Motor neuron (in vitro differentiated cells): ENCODE measurements at regions of chr3 and their contacts with region 1.

Region 1: DNA sequence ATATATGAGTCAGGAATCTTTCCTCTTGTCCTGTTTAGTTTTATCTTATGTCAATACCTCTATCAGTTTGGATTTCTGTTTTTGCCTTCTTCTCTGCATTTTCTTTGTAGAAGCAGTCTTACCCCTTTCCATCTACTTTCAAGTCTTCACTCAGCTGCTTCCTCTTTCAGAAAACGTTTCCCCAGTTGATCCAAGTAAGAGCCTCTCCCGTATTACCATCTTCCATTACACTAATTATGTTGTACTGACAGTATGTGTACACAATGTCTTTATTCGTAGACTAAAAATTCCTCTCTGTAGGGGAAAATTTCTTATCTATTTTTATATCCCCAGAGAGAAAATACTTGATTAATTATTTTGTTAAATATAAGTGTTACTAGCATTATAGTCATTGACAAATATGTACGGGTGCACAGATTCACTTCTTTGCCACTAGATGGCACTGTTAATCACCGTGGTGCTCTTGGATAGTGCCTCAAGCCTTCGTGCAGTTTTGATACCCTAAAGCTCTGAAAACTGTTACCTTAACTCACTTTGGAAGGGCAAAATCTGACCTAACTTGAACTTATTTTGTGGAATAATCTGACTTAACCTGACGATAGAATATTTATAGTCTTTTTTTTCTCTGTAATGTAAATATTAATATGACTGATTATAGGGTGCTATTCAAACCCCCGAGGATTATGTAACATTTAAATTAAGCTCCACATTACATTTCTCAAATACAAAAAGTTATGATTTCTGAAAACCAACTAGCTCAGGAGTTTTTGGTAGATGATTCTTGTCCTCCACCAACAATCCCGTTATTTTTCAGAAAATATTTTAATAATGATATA is 74.2 kb upstream of the POU1F1 start:
- ATAC-seq: peak; percentile 55 to 94 (median 78)
- H3K4me3 ChIP-seq: no peak overlapping the region
- H3K27ac ChIP-seq: no peak overlapping the region
- H3K4me1 ChIP-seq: no peaks in the 10 kb centered on the region

Region 2: DNA sequence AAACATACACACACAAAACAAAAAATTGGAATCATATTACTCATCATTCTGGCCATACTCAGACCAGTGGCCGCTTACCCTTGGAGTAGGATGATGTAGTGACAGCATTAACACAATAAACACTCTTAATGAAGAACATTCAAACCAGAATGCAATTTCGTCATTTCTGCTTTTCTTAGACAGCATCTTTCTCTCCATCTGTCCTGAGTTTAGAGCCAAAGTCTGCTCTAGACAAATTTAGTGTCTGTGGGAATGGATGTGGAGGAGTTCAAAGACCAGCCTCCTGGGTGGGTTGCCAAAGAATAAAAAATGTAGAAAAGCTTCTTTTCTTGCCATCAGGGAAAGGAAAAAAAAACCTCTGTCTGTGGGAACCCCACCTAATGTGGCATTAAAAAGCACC is 138.2 kb after region 1 on chr3:
- in situ Hi-C with region 1: loop called in 1 of 9 experiments (anchors 25 kb)
- ATAC-seq: peak in 2 of 8 experiments; percentile 82 to 88
- H3K4me3 ChIP-seq: no peak overlapping the region
- H3K27ac ChIP-seq: no peak overlapping the region
- H3K4me1 ChIP-seq: no peaks in the 10 kb centered on the region

Region 3: GRCh38 chr3:87541723-87542122 is 191.1 kb after region 1 on chr3:
- in situ Hi-C with region 1: no loop called
- ATAC-seq: peak in 2 of 8 experiments; percentile 18 to 51
- H3K4me3 ChIP-seq: no peak overlapping the region
- H3K27ac ChIP-seq: no peak overlapping the region
- H3K4me1 ChIP-seq: peaks cover 0 to 5% of the 10 kb centered on the region in 2 donors